ENCODE measurements at regions of chr15 and their contacts with region 1.

Region 1: GRCh38 chr15:57298843-57299550 is 77.3 kb upstream of the CGNL1 start:
- DNase-seq: no peak
- ATAC-seq: no peak
- H3K4me3 Mint-ChIP-seq: no peak overlapping the region
- H3K27ac Mint-ChIP-seq: peak overlapping the region; percentile 46
- H3K4me1 Mint-ChIP-seq: peaks cover 8% of the 10 kb centered on the region
- H3K27me3 Mint-ChIP-seq: peaks cover 4% of the 10 kb centered on the region

Region 2: DNA sequence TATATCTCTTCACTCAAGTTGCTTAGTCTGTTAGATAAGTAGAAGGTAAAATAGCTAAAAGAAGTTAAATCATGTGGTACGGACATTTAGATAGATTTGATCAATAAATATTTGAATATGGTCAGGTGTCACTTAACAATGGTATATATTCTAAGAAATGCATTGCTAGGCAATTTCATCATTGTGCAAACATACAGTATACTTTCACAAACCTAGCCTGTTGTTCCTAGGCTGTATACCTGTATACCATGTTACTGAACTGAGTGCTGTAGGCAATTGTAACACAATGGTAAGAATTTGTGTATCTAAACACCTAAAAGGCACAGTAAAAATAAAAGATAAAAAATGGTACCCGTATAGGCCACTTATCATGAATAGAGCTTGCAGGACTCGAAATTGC is 35.5 kb before region 1 on chr15:
- POLR2A ChIA-PET with region 1: interaction called, 10 read pairs
- DNase-seq: no peak
- ATAC-seq: no peak
- H3K4me3 Mint-ChIP-seq: no peak overlapping the region
- H3K27ac Mint-ChIP-seq: no peak overlapping the region
- H3K4me1 Mint-ChIP-seq: no peaks in the 10 kb centered on the region
- H3K27me3 Mint-ChIP-seq: no peaks in the 10 kb centered on the region

Region 3: GRCh38 chr15:57281321-57281720 is 17.7 kb before region 1 on chr15:
- POLR2A ChIA-PET with region 1: no interaction called
- DNase-seq: no peak
- ATAC-seq: no peak
- H3K4me3 Mint-ChIP-seq: no peak overlapping the region
- H3K27ac Mint-ChIP-seq: no peak overlapping the region
- H3K4me1 Mint-ChIP-seq: no peaks in the 10 kb centered on the region
- H3K27me3 Mint-ChIP-seq: no peaks in the 10 kb centered on the region